K562 (cell line): ENCODE measurements at regions of chr1 and their contacts with region 1.

Region 1: GRCh38 chr1:192477630-192478029 is 97.9 kb upstream of the RGS1 start:
- DNase-seq: peak in 1 of 4 experiments; percentile 18
- ATAC-seq: peak; percentile 70
- H3K4me3 ChIP-seq: no peak overlapping the region
- H3K27ac ChIP-seq: no peak overlapping the region
- H3K4me1 ChIP-seq: no peaks in the 10 kb centered on the region; a peak in 2 of 5 replicates
- H3K27me3 ChIP-seq: no peaks in the 10 kb centered on the region; a peak in 1 of 5 replicates
- CTCF ChIP-seq: peak in 2 of 3 experiments; percentile 21 to 51; a peak in 3 of 6 replicates
- EP300 ChIP-seq: no peak
- POLR2A ChIP-seq: no peak
- RAD21 ChIP-seq: peak; percentile 77 to 81

Region 2: GRCh38 chr1:192327997-192328396 is 149.6 kb before region 1 on chr1:
- CTCF ChIA-PET with region 1: no interaction called
- POLR2A ChIA-PET with region 1: no interaction called
- in situ Hi-C with region 1: no loop called
- intact Hi-C with region 1: no loop called
- DNase-seq: no peak
- ATAC-seq: no peak
- H3K4me3 ChIP-seq: no peak overlapping the region
- H3K27ac ChIP-seq: no peak overlapping the region
- H3K4me1 ChIP-seq: no peaks in the 10 kb centered on the region
- H3K27me3 ChIP-seq: no peaks in the 10 kb centered on the region
- CTCF ChIP-seq: no peak
- EP300 ChIP-seq: no peak
- POLR2A ChIP-seq: no peak
- RAD21 ChIP-seq: no peak

Region 3: GRCh38 chr1:192609110-192610079 is 131.8 kb after region 1 on chr1:
- CTCF ChIA-PET with region 1: interaction called, 10 read pairs
- POLR2A ChIA-PET with region 1: interaction called, 3 read pairs
- in situ Hi-C with region 1: no loop called
- intact Hi-C with region 1: loop called (anchors 1 kb)
- DNase-seq: peak in 1 of 4 experiments; percentile 2
- ATAC-seq: peak; percentile 40; the same call in 1 of the 3 replicates
- H3K4me3 ChIP-seq: no peak overlapping the region
- H3K27ac ChIP-seq: no peak overlapping the region
- H3K4me1 ChIP-seq: no peaks in the 10 kb centered on the region
- H3K27me3 ChIP-seq: no peaks in the 10 kb centered on the region
- CTCF ChIP-seq: no peak
- EP300 ChIP-seq: no peak
- POLR2A ChIP-seq: no peak
- RAD21 ChIP-seq: no peak

Region 4: DNA sequence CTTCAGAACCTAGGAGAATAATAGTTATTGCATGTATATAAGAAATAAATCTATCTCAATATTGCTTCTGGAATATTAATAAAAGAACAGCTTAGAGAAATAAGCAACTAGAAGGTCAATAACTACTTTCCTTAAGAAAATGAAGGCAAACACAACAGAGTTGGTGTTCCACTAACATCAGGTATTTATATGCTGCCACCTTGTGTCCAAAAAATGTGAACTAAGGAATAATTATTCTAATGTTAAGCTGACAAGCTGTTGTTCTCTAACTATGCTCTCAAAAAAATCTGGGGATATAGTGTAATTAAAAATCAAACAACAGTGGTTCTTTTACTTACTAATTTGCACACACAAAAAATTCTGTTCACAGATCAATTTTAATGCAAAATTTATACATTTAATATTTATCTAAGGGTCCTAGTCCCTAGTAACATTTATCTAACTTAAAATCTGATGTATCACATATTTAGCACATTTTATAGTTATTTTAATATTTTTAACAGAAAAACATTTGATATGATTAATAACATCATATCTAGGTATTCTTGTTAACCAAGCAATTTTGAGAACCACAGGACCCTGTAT is 541.9 kb after region 1 on chr1:
- CTCF ChIA-PET with region 1: interaction called, 14 read pairs
- POLR2A ChIA-PET with region 1: no interaction called
- in situ Hi-C with region 1: no loop called
- intact Hi-C with region 1: loop called (anchors 5 kb)
- DNase-seq: peak; percentile 24 to 49 (median 36)
- ATAC-seq: peak; percentile 85
- H3K4me3 ChIP-seq: no peak overlapping the region
- H3K27ac ChIP-seq: no peak overlapping the region
- H3K4me1 ChIP-seq: no peaks in the 10 kb centered on the region
- H3K27me3 ChIP-seq: no peaks in the 10 kb centered on the region
- CTCF ChIP-seq: peak in 1 of 3 experiments; percentile 69; a peak in 2 of 6 replicates
- EP300 ChIP-seq: no peak
- POLR2A ChIP-seq: no peak
- RAD21 ChIP-seq: peak; percentile 77

Region 5: DNA sequence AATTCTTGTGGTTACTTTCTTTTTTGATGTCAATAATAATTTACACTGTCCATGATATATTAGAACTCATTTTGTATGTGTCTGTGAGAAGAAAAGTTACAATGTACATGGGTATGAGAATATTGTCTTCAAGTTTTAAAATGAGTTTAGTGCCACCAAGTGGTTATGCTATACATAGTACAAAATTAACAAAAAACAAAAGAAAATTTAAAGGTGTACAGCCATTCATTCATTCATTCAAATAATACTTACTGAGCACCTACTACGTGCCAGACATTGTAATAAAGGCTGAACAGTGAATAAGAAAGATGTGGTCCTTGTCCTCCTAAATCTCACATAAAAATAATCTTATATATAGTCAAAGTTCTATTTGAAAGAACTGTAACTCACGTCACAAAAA is 553.8 kb after region 1 on chr1:
- CTCF ChIA-PET with region 1: interaction called, 4 read pairs
- POLR2A ChIA-PET with region 1: no interaction called
- in situ Hi-C with region 1: no loop called
- intact Hi-C with region 1: loop called (anchors 5 kb)
- DNase-seq: no peak
- ATAC-seq: peak; percentile 84
- H3K4me3 ChIP-seq: no peak overlapping the region
- H3K27ac ChIP-seq: no peak overlapping the region
- H3K4me1 ChIP-seq: no peaks in the 10 kb centered on the region; a peak in 1 of 5 replicates
- H3K27me3 ChIP-seq: no peaks in the 10 kb centered on the region
- CTCF ChIP-seq: peak in 1 of 3 experiments; percentile 43; a peak in 2 of 6 replicates
- EP300 ChIP-seq: no peak
- POLR2A ChIP-seq: no peak
- RAD21 ChIP-seq: peak; percentile 32 to 37; a peak in 3 of 4 replicates

Region 6: DNA sequence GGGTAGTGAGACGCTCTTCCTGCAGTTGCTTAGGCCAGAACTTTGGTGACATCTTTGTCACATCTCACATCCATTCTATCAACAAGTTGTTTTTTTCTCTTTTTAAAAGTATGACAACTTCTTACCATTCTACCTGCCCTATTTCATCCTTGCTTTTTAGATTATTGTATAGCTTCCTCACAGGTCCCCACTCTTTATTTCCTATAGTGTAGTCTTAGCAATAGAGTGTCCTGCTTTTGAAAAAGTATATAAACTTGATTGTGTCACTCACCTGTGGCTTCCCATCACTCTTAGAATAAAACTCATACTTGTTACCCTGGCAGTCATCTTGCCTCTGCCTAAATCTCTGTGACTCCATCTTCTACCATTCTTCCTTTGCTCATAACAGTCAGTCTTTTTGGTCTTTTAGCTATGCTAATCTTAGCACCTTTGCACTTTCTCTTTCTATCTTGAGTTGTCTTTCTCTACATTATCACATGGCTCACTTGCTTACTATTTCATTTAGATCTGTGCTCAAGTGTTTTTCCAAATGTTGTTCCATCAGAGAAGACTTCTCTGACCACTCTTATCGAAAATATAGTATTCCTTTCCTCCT is 653.7 kb after region 1 on chr1:
- CTCF ChIA-PET with region 1: no interaction called
- POLR2A ChIA-PET with region 1: no interaction called
- in situ Hi-C with region 1: no loop called
- intact Hi-C with region 1: no loop called
- DNase-seq: no peak
- ATAC-seq: no peak
- H3K4me3 ChIP-seq: no peak overlapping the region
- H3K27ac ChIP-seq: no peak overlapping the region
- H3K4me1 ChIP-seq: no peaks in the 10 kb centered on the region; a peak in 1 of 5 replicates
- H3K27me3 ChIP-seq: no peaks in the 10 kb centered on the region
- CTCF ChIP-seq: no peak
- EP300 ChIP-seq: no peak
- POLR2A ChIP-seq: no peak
- RAD21 ChIP-seq: no peak